GM18951 (cell line): ENCODE measurements at regions of chr13 and their contacts with region 1.

Region 1: GRCh38 chr13:31431722-31432137 is 232.0 kb downstream of the B3GLCT start:
- POLR2A ChIP-seq: no peak

Region 2: DNA sequence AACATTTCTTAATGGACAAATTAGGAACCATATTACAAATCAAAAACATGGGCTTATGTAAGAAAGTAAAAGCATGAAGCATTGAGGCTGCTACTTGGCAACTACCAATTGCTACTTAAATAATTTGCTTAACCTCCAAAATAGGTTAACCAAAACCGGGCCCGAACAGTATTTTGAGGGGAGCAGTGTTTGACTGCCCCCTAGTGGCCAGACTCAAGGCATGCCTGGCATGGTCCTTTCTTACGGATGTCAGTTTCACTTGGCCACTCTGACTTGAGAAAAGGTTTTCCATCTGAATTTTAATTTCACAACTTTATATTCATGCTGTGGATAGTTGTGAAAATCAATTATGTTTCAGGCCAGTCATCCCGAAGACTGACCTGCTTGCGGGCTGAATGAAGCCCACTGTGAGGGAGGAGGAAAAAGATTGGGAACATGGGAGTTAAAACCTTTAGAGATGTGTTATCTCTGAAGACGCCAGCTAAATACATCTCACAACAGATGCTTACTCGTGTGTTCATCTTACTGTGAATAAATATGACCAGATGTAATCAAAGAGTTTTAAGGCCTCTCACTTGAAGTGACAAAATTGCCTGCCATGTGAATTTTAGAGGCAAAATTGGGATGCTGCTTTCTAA is 310.5 kb after region 1 on chr13:
- in situ Hi-C with region 1: loop called (anchors 5 kb)
- POLR2A ChIP-seq: no peak